Heart right ventricle (tissue), 16 donors: ENCODE measurements at regions of chr7 and their contacts with region 1.

Region 1: DNA sequence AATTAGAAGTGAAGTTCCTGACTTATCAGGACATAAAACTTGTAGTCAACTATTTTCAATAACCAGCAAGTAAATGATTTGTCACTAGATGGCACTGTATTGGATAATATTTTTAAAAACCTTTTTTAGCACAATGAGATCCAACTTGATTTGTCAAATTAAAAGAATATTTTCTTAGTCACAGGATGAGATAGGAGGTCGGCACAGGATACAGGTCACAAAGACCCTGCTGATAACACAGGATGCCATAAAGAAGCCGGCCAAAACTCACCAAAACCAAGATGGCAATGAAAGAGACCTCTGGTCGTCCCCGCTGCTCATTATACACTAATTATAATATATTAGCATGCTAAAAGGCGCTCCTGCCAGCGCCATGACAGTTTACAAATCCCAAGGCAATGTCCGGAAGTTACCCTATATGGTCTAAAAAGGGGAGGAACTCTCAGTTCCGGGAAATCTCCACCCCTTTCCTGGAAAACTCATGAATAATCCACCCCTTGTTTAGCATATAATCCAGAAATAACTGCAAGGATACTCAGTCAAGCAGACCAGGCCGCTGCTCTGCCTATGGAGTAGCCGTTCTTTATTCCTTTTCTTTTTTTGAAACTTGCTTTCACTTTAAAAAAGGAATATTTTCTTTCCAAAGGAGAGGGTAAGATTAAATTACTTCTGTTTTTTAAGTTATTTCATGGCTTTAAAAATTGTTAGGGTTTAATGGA is 255.7 kb upstream of the MKLN1 start:
- DNase-seq: peak in 1 of 2 donors; percentile 87
- ATAC-seq: peak; percentile 54 to 80 (median 74)
- H3K4me3 ChIP-seq: peak overlapping the region in 7 of 10 donors; percentile 1 to 36 (median 31)
- H3K27ac ChIP-seq: peak overlapping the region in 9 of 10 donors; percentile 59 to 84 (median 70)
- H3K4me1 ChIP-seq: peaks cover 6 to 98% (median 74%) of the 10 kb centered on the region in 9 donors
- H3K27me3 ChIP-seq: no peaks in the 10 kb centered on the region
- CTCF ChIP-seq: peak in 8 of 9 donors; percentile 34 to 70 (median 52)

Region 2: DNA sequence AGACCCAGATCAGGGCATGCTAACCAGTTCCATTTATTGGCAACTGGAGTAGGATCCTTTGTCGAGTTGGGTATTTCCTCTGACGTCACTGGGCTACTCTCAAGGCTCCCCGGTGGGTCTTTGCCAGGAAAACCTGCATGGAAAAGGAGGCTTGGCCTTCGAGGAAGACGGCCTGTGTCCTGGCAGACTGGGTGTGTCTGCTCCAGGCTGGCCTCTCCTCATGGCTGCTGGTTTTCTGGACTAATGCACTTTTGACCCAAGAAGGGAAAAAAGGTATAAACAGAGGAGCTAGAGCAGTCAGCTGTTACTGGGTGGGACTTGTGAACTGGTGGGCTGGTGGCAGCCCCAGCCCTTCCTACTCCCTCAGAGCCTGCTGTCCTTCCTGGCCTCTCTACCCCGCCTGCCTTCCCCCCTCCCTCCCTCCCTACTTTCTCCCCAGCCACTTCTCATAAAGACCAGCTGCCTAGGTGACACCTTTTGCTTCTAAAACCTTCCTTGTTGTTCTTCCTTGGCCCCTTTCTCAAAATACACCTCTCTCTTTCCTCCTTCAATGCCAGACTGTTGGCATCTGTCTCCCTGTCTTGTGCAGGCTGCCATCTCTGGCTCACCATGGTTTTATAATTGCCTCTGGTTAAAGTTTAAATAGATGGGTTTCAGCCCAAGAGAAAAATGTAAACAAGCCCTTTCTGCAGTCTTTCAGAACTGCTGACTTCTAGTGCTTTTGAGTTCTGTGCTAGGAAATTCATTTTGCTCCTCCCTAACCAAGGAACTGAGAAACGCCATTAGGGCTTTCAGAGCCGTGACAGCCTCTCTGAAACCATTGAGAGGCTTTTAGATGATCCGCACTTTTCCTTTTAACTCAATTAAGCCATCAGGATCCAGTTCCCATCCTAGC is 153.9 kb after region 1 on chr7:
- intact Hi-C with region 1: loop called in 1 of 10 experiments (anchors 10 kb)
- DNase-seq: peak; percentile 16 to 53
- ATAC-seq: peak; percentile 58 to 76 (median 74)
- H3K4me3 ChIP-seq: no peak overlapping the region
- H3K27ac ChIP-seq: peak overlapping the region in 8 of 10 donors; percentile 5 to 74 (median 44)
- H3K4me1 ChIP-seq: peaks cover 0 to 18% (median 10%) of the 10 kb centered on the region in 9 donors
- H3K27me3 ChIP-seq: no peaks in the 10 kb centered on the region
- CTCF ChIP-seq: no peak

Region 3: GRCh38 chr7:131302876-131303707 is 231.1 kb after region 1 on chr7:
- intact Hi-C with region 1: loop called in 6 of 10 experiments (anchors 5 to 10 kb)
- DNase-seq: peak in 1 of 2 donors; percentile 23
- ATAC-seq: peak; percentile 36 to 66 (median 49)
- H3K4me3 ChIP-seq: no peak overlapping the region
- H3K27ac ChIP-seq: peak overlapping the region in 9 of 10 donors; percentile 3 to 78 (median 48)
- H3K4me1 ChIP-seq: peaks cover 0 to 40% (median 23%) of the 10 kb centered on the region in 9 donors
- H3K27me3 ChIP-seq: no peaks in the 10 kb centered on the region
- CTCF ChIP-seq: peak in 8 of 9 donors; percentile 34 to 72 (median 59)

Region 4: GRCh38 chr7:131424219-131424822 is 352.4 kb after region 1 on chr7:
- intact Hi-C with region 1: loop called in 7 of 10 experiments (anchors 5 to 10 kb)
- DNase-seq: no peak
- ATAC-seq: peak; percentile 48 to 86 (median 64)
- H3K4me3 ChIP-seq: no peak overlapping the region
- H3K27ac ChIP-seq: no peak overlapping the region
- H3K4me1 ChIP-seq: peaks cover 0 to 29% (median 13%) of the 10 kb centered on the region in 9 donors
- H3K27me3 ChIP-seq: no peaks in the 10 kb centered on the region
- CTCF ChIP-seq: peak; percentile 44 to 76 (median 68)